ENCODE measurements at regions of chr7 and their contacts with region 1.

Region 1: GRCh38 chr7:24819916-24820689 is 62.8 kb upstream of the GSDME start:
- DNase-seq: no peak
- ATAC-seq: peak; percentile 84
- H3K4me3 ChIP-seq: no peak overlapping the region
- H3K27ac ChIP-seq: peak overlapping the region; percentile 81
- H3K4me1 ChIP-seq: peaks cover 21% of the 10 kb centered on the region
- H3K27me3 ChIP-seq: no peaks in the 10 kb centered on the region
- CTCF ChIP-seq: peak; percentile 82 to 95 (median 87)
- EP300 ChIP-seq: peak in 1 of 2 experiments; percentile 33; a peak in 1 of 4 replicates
- POLR2A ChIP-seq: no peak
- RAD21 ChIP-seq: peak; percentile 99

Region 2: GRCh38 chr7:24366876-24367275 is 453.2 kb before region 1 on chr7:
- CTCF ChIA-PET with region 1: no interaction called
- POLR2A ChIA-PET with region 1: no interaction called
- RAD21 ChIA-PET with region 1: no interaction called
- SMC1A ChIA-PET with region 1: no interaction called
- in situ Hi-C with region 1: no loop called
- intact Hi-C with region 1: no loop called
- DNase-seq: no peak
- ATAC-seq: no peak
- H3K4me3 ChIP-seq: no peak overlapping the region
- H3K27ac ChIP-seq: no peak overlapping the region
- H3K4me1 ChIP-seq: no peaks in the 10 kb centered on the region
- H3K27me3 ChIP-seq: no peaks in the 10 kb centered on the region
- CTCF ChIP-seq: no peak
- EP300 ChIP-seq: no peak
- POLR2A ChIP-seq: no peak
- RAD21 ChIP-seq: no peak

Region 3: DNA sequence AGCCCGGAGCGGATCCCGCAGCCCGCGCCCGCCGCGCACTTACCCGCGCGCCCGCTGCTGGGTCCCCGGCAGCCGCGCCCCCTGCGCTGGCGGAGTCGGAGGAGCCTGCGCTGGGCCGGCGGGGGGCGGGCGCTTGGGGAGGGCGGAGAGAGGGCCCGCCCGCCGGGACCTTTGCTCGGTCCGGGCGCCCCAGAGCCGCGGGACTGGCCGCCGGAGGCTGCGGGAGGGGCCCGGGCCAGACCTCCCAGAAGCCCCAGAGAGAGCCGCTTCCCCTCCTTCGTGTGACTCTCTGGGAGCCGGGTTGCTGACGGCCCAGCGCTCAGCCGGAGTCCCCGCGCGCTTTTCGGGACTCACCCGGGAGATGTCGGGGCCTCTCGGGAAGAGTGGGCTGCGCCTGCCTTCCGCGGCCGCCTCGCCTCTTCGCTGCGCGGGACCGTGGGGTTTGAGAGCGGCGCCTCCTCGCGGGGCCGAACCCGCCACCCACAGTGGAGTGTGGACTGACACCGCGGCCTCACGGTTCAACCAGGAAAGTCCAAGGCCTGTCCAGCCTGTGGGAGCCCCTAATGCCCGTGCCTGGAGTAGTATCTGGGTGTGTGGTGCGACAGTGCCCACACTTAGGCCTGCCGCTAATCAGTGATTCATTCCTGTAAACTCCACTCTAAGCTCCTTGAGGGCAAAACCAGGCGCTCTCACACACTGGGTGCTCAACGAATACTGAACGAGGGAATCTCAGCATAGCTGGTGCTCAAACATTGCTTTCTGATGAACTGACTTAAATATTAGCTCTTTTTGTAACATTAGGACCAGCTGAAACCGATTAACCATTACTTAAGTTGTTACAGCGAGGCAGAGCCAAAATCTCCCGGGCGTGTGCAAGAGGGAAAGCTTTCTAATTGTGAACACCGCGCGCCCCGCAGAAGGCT is 62.5 kb before region 1 on chr7 and contains the start of gene GSDME:
- CTCF ChIA-PET with region 1: no interaction called
- POLR2A ChIA-PET with region 1: no interaction called
- RAD21 ChIA-PET with region 1: no interaction called
- SMC1A ChIA-PET with region 1: interaction called, 10 read pairs
- in situ Hi-C with region 1: no loop called
- intact Hi-C with region 1: no loop called
- DNase-seq: no peak
- ATAC-seq: peak; percentile 85
- H3K4me3 ChIP-seq: peak within 1 kb of the TSS; percentile 88
- H3K27ac ChIP-seq: peak within 1 kb of the TSS; percentile 93
- H3K4me1 ChIP-seq: peaks cover 40% of the 10 kb centered on the region
- H3K27me3 ChIP-seq: no peaks in the 10 kb centered on the region
- CTCF ChIP-seq: no peak
- EP300 ChIP-seq: no peak
- POLR2A ChIP-seq: peak; percentile 60; the same call in 1 of the 2 replicates
- RAD21 ChIP-seq: no peak
- polyA plus RNA-seq, gene GSDME: 62.5 to 83.7 TPM

Region 4: GRCh38 chr7:24847754-24848153 is 27.7 kb after region 1 on chr7:
- CTCF ChIA-PET with region 1: interaction called, 12 read pairs
- POLR2A ChIA-PET with region 1: interaction called, 5 read pairs
- RAD21 ChIA-PET with region 1: interaction called, 24 read pairs
- SMC1A ChIA-PET with region 1: interaction called, 20 read pairs
- in situ Hi-C with region 1: no loop called
- intact Hi-C with region 1: loop called (anchors 1 kb)
- DNase-seq: no peak
- ATAC-seq: peak; percentile 15
- H3K4me3 ChIP-seq: no peak overlapping the region
- H3K27ac ChIP-seq: no peak overlapping the region
- H3K4me1 ChIP-seq: peaks cover 22% of the 10 kb centered on the region
- H3K27me3 ChIP-seq: no peaks in the 10 kb centered on the region
- CTCF ChIP-seq: no peak
- EP300 ChIP-seq: no peak
- POLR2A ChIP-seq: no peak
- RAD21 ChIP-seq: no peak

Region 5: GRCh38 chr7:24896031-24896501 is 76.0 kb after region 1 on chr7:
- CTCF ChIA-PET with region 1: interaction called, 8 read pairs
- POLR2A ChIA-PET with region 1: no interaction called
- RAD21 ChIA-PET with region 1: interaction called, 14 read pairs
- SMC1A ChIA-PET with region 1: interaction called, 16 read pairs
- in situ Hi-C with region 1: no loop called
- intact Hi-C with region 1: loop called (anchors 2 kb)
- DNase-seq: peak; percentile 52
- ATAC-seq: peak; percentile 70
- H3K4me3 ChIP-seq: no peak overlapping the region
- H3K27ac ChIP-seq: peak overlapping the region; percentile 75
- H3K4me1 ChIP-seq: peaks cover 57% of the 10 kb centered on the region
- H3K27me3 ChIP-seq: no peaks in the 10 kb centered on the region
- CTCF ChIP-seq: peak in 1 of 3 experiments; percentile 45; a peak in 2 of 6 replicates
- EP300 ChIP-seq: peak; percentile 55 to 79; a peak in 3 of 4 replicates
- POLR2A ChIP-seq: no peak
- RAD21 ChIP-seq: peak; percentile 40; the same call in 1 of the 2 replicates

Region 6: DNA sequence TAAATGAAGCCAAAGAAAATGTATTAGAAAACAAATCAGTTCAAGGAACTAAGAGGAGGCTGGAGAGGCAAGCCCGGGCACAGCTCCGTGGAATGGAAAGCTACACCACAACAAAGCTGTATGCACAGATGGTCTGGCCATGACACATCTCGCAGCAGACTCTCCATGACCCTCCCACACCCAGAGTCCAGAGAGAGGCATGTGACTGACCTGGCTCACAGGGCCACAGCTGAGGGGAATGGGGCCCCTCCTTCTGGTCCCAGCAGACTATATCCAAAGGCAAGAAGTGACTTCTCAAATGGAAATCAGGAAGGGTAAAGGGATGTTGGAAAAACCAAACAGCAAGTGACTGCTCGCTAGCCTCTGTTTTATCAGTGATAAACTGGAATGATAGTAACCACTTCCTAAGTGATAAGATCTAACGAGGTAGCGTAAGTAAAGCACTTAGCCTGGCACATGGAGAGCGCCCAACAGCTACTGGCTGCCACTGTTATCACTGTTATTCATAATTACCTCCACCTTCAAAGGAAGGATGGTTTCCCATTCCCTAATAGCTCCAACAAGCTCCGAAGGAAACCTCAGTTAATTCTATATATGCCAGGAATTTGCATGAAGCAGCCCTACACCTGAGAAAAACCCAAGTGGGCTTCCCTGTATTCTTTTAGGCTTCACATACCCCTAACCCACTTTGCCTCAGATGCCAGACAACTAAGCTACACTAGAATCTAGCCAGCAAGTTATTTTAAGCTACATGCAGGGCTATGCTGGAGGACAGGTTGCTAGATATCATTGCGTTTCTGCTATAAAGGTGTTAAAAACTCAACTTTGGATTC is 151.4 kb after region 1 on chr7:
- CTCF ChIA-PET with region 1: interaction called, 129 read pairs
- POLR2A ChIA-PET with region 1: interaction called, 13 read pairs
- RAD21 ChIA-PET with region 1: interaction called, 106 read pairs
- SMC1A ChIA-PET with region 1: interaction called, 103 read pairs
- in situ Hi-C with region 1: no loop called
- intact Hi-C with region 1: loop called (anchors 1 kb)
- DNase-seq: no peak
- ATAC-seq: peak; percentile 28
- H3K4me3 ChIP-seq: no peak overlapping the region
- H3K27ac ChIP-seq: peak overlapping the region; percentile 7
- H3K4me1 ChIP-seq: peaks cover 37% of the 10 kb centered on the region
- H3K27me3 ChIP-seq: no peaks in the 10 kb centered on the region
- CTCF ChIP-seq: no peak
- EP300 ChIP-seq: no peak
- POLR2A ChIP-seq: no peak
- RAD21 ChIP-seq: no peak

Region 7: DNA sequence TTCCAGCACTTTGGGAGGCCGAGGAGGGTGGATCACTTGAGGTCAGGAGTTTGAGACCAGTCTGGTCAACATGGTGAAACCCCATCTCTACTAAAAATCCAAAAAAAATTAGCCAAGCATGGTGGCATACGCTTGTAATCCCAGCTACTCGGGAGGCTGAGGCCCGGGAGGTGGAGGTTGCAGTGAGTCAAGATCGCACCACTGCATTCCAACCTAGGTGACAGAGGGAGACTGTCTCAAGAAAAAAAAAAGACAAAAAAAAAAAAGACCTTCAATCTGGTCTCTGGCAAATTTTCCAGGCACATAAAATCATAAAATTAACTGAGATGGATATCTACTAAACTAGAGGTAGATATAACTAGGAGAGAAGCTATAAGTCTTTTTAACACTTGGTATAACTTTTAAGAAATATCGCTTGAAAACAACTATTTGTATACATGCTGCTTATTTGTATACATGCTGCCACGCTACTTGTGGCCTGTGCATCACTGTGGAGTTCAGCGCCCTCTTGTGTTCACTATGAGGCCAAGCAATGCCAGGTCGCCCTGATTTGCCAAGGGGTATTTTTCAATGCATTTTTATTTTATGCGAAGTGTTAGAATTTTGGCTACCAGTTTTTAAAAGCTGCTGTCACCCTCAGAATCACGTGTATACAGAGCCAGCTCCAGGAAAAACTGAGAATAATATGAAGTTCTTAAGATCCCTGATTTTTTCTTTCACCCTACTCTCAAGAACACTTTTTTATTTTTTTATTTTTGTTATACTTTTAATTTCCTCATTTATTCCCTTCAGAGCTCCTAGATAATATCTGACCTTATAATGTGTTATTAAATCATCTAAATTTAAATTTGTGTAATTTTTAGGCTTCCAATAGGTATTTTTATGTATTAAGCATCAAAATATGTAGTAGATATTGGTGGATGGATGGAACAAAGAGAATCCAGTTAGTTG is 278.3 kb after region 1 on chr7:
- CTCF ChIA-PET with region 1: interaction called, 290 read pairs
- POLR2A ChIA-PET with region 1: no interaction called
- RAD21 ChIA-PET with region 1: interaction called, 120 read pairs
- SMC1A ChIA-PET with region 1: interaction called, 160 read pairs
- in situ Hi-C with region 1: loop called (anchors 5 kb)
- intact Hi-C with region 1: loop called (anchors 1 kb)
- DNase-seq: no peak
- ATAC-seq: peak; percentile 79
- H3K4me3 ChIP-seq: no peak overlapping the region
- H3K27ac ChIP-seq: no peak overlapping the region
- H3K4me1 ChIP-seq: peaks cover 2% of the 10 kb centered on the region
- H3K27me3 ChIP-seq: no peaks in the 10 kb centered on the region
- CTCF ChIP-seq: peak; percentile 90 to 95 (median 91)
- EP300 ChIP-seq: no peak
- POLR2A ChIP-seq: no peak
- RAD21 ChIP-seq: peak; percentile 90